Activated B cell treated with CpG ODN at 0.5 μM for 24 hours (primary cell): ENCODE measurements at regions of chr5 and their contacts with region 1.

Region 1: GRCh38 chr5:39148983-39149534 is 70.3 kb downstream of the FYB1 start:
- DNase-seq: no peak
- ATAC-seq: no peak
- H3K4me3 Mint-ChIP-seq: no peak overlapping the region
- H3K27ac Mint-ChIP-seq: no peak overlapping the region
- H3K4me1 Mint-ChIP-seq: peaks cover 27% of the 10 kb centered on the region
- H3K27me3 Mint-ChIP-seq: no peaks in the 10 kb centered on the region
- CTCF ChIP-seq: no peak

Region 2: GRCh38 chr5:39177631-39177964 is 28.5 kb after region 1 on chr5:
- CTCF ChIA-PET with region 1: no interaction called
- POLR2A ChIA-PET with region 1: interaction called, 3 read pairs
- intact Hi-C with region 1: loop called (anchors 2 kb)
- DNase-seq: no peak
- ATAC-seq: peak; percentile 66
- H3K4me3 Mint-ChIP-seq: peak overlapping the region; percentile 49
- H3K27ac Mint-ChIP-seq: peak overlapping the region; percentile 72
- H3K4me1 Mint-ChIP-seq: peaks cover 49% of the 10 kb centered on the region
- H3K27me3 Mint-ChIP-seq: no peaks in the 10 kb centered on the region
- CTCF ChIP-seq: no peak